H1 (cell line): ENCODE measurements at regions of chr13 and their contacts with region 1.

Region 1: GRCh38 chr13:110644892-110645521 is 29.7 kb downstream of the NAXD start:
- DNase-seq: peak; percentile 82 to 87
- H3K4me3 ChIP-seq: no peak overlapping the region
- H3K27ac ChIP-seq: no peak overlapping the region
- H3K4me1 ChIP-seq: peaks cover 0 to 11% (median 7%) of the 10 kb centered on the region in 4 experiments; a peak in 5 of 7 replicates
- H3K27me3 ChIP-seq: no peaks in the 10 kb centered on the region
- CTCF ChIP-seq: peak in 2 of 3 experiments; percentile 83 to 85; a peak in 3 of 4 replicates
- EP300 ChIP-seq: no peak
- POLR2A ChIP-seq: no peak
- RAD21 ChIP-seq: peak; percentile 93

Region 2: DNA sequence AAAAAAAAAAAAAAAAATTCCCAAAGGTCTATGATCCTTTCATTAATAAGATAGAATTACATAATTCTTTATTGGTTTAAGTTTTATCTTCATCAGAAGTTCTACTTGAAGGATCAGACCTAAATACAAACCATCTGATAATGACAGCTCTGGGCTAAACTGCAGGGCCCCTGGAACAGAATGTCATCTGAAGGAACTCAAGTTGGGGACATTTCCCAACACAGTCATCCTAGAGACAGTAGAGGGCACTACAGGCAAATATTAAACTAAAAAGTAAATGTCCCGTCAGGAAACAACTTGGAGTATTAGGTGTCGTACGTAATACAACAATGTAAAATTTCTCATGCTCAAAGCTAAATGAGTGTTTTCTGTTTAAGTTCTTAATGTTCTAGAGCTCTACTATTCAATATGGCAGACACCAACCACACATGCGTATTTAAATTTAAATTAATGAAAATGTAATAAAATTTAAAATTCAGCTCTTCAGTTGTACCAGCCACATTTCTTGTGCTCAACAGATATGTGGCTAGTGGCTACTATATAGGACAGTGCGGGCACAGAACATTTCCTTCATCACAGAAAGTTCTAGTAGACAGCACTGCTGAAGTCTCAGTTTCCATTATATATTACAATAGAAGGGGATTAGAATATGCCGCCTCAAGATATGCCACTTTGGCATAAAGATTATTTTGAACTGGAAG is 51.4 kb before region 1 on chr13:
- CTCF ChIA-PET with region 1: interaction called, 16 read pairs
- POLR2A ChIA-PET with region 1: no interaction called
- DNase-seq: no peak
- H3K4me3 ChIP-seq: no peak overlapping the region
- H3K27ac ChIP-seq: no peak overlapping the region
- H3K4me1 ChIP-seq: peaks cover 0 to 3% (median 2%) of the 10 kb centered on the region in 4 experiments; a peak in 4 of 7 replicates
- H3K27me3 ChIP-seq: no peaks in the 10 kb centered on the region
- CTCF ChIP-seq: peak in 2 of 3 experiments; percentile 59 to 60; a peak in 3 of 4 replicates
- EP300 ChIP-seq: no peak
- POLR2A ChIP-seq: no peak
- RAD21 ChIP-seq: peak; percentile 63 to 79

Region 3: GRCh38 chr13:110620596-110620995 is 24.4 kb before region 1 on chr13:
- CTCF ChIA-PET with region 1: interaction called, 23 read pairs
- POLR2A ChIA-PET with region 1: interaction called, 5 read pairs
- DNase-seq: no peak
- H3K4me3 ChIP-seq: no peak overlapping the region
- H3K27ac ChIP-seq: no peak overlapping the region
- H3K4me1 ChIP-seq: peaks cover 5 to 16% (median 7%) of the 10 kb centered on the region in 4 experiments; a peak in 6 of 7 replicates
- H3K27me3 ChIP-seq: no peaks in the 10 kb centered on the region
- CTCF ChIP-seq: no peak
- EP300 ChIP-seq: no peak
- POLR2A ChIP-seq: no peak
- RAD21 ChIP-seq: no peak

Region 4: GRCh38 chr13:110625771-110626321 is 19.2 kb before region 1 on chr13:
- CTCF ChIA-PET with region 1: interaction called, 23 read pairs
- POLR2A ChIA-PET with region 1: interaction called, 3 read pairs
- DNase-seq: no peak
- H3K4me3 ChIP-seq: no peak overlapping the region
- H3K27ac ChIP-seq: no peak overlapping the region
- H3K4me1 ChIP-seq: no peaks in the 10 kb centered on the region; a peak in 1 of 7 replicates
- H3K27me3 ChIP-seq: no peaks in the 10 kb centered on the region
- CTCF ChIP-seq: no peak
- EP300 ChIP-seq: no peak
- POLR2A ChIP-seq: no peak
- RAD21 ChIP-seq: no peak

Region 5: GRCh38 chr13:110819203-110820014 is 174.4 kb after region 1 on chr13:
- CTCF ChIA-PET with region 1: interaction called, 10 read pairs
- POLR2A ChIA-PET with region 1: no interaction called
- DNase-seq: peak; percentile 43 to 93
- H3K4me3 ChIP-seq: no peak overlapping the region; a peak in 1 of 8 replicates
- H3K27ac ChIP-seq: no peak overlapping the region
- H3K4me1 ChIP-seq: 0 out of 7 replicates have a peak, but pooled peaks cover 0 to 2% (median 0%) of the 10 kb centered on the region in 4 experiments
- H3K27me3 ChIP-seq: no peaks in the 10 kb centered on the region
- CTCF ChIP-seq: peak; percentile 88 to 98 (median 88)
- EP300 ChIP-seq: no peak
- POLR2A ChIP-seq: no peak
- RAD21 ChIP-seq: peak; percentile 90

Region 6: DNA sequence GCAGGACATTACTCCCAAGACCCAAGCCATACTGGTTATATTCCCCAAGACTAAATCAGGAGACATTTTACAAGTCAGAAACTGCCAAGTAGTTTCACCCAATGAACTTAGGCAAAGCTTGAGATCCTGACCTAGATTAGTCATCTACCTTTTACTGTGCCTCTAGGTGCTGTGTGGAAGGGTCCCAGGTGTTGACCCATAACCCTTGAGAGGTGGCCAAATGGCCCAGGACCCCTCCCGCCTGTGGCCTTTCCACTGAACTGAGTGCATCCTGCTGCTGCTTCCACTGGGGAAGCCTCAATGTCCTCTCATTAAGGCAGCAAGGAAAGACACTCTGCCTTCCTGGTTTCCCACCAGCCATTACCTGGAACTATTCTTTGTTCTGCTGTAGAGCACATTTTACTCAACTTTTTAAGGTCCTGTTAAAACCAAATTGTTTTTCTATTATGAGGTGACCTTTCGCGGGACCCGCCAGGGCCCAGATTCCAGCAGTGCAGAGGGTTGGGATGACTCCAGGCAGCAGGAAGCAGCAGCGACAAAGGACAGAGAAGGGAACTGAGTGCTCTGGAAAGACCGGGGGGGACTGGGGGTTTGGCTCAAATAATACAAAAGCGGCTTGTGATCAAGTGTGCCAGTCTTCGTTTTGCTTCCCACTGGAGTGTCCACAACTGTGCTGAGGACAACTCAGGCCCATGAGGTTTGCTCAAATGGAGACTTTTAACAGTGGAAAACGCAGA is 242.8 kb after region 1 on chr13:
- CTCF ChIA-PET with region 1: interaction called, 11 read pairs
- POLR2A ChIA-PET with region 1: no interaction called
- DNase-seq: peak in 1 of 2 experiments; percentile 57
- H3K4me3 ChIP-seq: no peak overlapping the region
- H3K27ac ChIP-seq: peak overlapping the region; percentile 44; the same call in 1 of the 2 replicates
- H3K4me1 ChIP-seq: peaks cover 2 to 7% (median 4%) of the 10 kb centered on the region in 4 experiments; a peak in 5 of 7 replicates
- H3K27me3 ChIP-seq: no peaks in the 10 kb centered on the region
- CTCF ChIP-seq: no peak
- EP300 ChIP-seq: no peak
- POLR2A ChIP-seq: peak; percentile 28 to 30; a peak in 2 of 3 replicates
- RAD21 ChIP-seq: no peak; a peak in 1 of 4 replicates

Region 7: DNA sequence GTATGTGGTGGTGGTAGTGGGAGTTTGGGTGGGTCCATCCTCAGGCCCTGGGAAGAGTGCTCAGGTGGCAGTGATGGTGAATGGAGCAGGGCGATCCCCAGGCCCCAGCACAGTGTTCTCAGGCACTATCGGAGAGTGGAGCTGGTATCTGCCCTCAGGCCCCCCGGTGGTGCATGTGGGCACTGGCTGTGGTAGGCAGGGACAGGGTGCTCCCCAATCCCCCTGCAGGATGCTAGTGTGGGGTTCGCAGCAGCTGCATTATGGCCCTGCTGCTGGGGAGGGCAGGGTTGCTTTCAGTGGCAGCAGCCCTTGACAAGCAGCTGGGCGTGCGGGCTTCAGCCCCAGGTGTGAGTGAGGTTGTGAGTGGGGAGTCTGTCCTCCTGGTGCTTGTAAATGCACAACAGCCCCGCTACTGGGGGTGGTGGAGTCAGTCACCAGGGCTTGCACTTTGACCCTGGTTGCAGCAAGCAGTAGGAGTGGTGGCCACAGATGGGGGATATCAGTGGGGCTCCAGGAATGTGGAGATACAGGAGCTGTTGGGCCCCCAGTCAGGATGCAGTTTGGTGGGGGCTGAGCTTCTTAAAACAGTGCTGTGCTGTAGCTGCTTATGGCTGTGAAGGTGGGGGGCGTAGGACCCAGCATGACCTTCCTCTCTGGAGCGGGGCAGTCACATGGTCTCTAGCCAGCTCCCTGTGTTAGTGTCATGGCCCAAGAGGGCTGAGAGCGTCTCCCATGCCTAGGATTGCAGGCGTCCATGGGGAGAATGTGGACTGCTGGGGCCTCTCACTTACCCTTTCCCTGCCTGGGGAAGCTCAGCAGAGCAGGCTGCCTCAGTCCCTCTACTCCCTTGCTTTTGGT is 431.4 kb after region 1 on chr13:
- CTCF ChIA-PET with region 1: no interaction called
- POLR2A ChIA-PET with region 1: no interaction called
- DNase-seq: no peak
- H3K4me3 ChIP-seq: no peak overlapping the region; a peak in 1 of 8 replicates
- H3K27ac ChIP-seq: no peak overlapping the region
- H3K4me1 ChIP-seq: no peaks in the 10 kb centered on the region; a peak in 2 of 7 replicates
- H3K27me3 ChIP-seq: no peaks in the 10 kb centered on the region
- CTCF ChIP-seq: peak; percentile 50 to 67 (median 64)
- EP300 ChIP-seq: no peak
- POLR2A ChIP-seq: no peak
- RAD21 ChIP-seq: peak in 1 of 2 experiments; percentile 33; a peak in 1 of 4 replicates